ENCODE measurements at regions of chr17 and their contacts with region 1.

Region 1: DNA sequence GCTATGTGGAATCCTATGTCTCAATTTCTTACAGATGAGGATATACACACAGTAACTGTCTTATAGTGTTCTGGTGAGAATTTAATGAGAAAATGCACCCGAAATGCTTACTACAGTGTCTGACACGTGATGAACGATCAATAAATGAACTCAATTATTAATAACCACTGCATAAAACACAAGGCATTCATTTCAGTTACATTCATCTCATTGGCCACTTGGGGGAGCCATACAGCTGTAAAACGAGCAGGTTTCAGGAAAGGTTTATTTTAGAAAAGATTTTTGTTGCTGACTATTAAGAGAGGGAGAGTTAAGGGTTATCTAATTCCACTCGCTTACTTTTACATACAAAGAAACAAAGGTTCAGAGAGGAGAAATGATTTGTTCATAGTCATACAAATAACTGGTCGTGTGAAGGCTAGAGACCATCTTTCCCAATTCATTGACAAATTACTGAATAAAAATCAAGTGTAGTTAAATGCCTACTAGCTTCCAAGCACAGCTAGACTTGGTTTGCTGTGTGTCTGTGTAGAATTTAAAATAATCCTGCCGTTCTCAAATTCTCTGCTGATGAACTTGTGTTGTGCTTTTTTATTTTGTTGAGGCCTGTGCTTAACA is 160.1 kb downstream of the MAP2K4 start:
- DNase-seq: peak in 2 of 9 experiments; percentile 22 to 33
- ATAC-seq: no peak
- H3K4me3 ChIP-seq: no peak overlapping the region
- H3K4me3 Mint-ChIP-seq: no peak overlapping the region
- H3K27ac ChIP-seq: no peak overlapping the region
- H3K27ac Mint-ChIP-seq: no peak overlapping the region
- H3K4me1 ChIP-seq: no peaks in the 10 kb centered on the region
- H3K4me1 Mint-ChIP-seq: no peaks in the 10 kb centered on the region
- H3K27me3 ChIP-seq: no peaks in the 10 kb centered on the region
- H3K27me3 Mint-ChIP-seq: peaks cover 2% of the 10 kb centered on the region
- CTCF ChIP-seq: peak; percentile 65

Region 2: GRCh38 chr17:11928436-11928835 is 252.3 kb before region 1 on chr17:
- CTCF ChIA-PET with region 1: no interaction called
- POLR2A ChIA-PET with region 1: no interaction called
- intact Hi-C with region 1: no loop called
- DNase-seq: no peak
- ATAC-seq: no peak
- H3K4me3 ChIP-seq: no peak overlapping the region
- H3K4me3 Mint-ChIP-seq: no peak overlapping the region
- H3K27ac ChIP-seq: no peak overlapping the region
- H3K27ac Mint-ChIP-seq: no peak overlapping the region
- H3K4me1 ChIP-seq: no peaks in the 10 kb centered on the region
- H3K4me1 Mint-ChIP-seq: no peaks in the 10 kb centered on the region
- H3K27me3 ChIP-seq: no peaks in the 10 kb centered on the region
- H3K27me3 Mint-ChIP-seq: peaks cover 13% of the 10 kb centered on the region
- CTCF ChIP-seq: no peak

Region 3: DNA sequence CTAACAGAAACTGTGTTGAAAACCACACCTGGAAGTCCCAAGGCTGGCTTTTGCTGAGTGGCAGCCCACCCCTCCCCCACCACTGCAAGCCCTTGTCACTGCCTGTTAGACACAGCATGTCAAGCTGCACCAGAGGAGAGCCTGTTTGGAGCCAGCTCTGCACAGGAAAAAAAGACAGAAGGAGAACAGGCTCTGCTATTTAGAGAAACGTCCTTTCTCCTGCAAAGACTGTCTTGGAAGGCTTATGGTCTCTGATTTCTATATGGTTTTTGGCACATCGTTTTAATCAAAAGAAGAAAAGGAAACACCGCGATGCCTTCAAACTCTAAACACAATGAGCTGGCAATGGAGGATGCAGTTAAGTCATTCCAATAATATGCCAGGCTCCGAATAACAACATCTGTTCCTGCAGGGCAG is 115.5 kb after region 1 on chr17:
- CTCF ChIA-PET with region 1: no interaction called
- POLR2A ChIA-PET with region 1: no interaction called
- intact Hi-C with region 1: no loop called
- DNase-seq: no peak
- ATAC-seq: no peak
- H3K4me3 ChIP-seq: no peak overlapping the region
- H3K4me3 Mint-ChIP-seq: no peak overlapping the region
- H3K27ac ChIP-seq: no peak overlapping the region
- H3K27ac Mint-ChIP-seq: no peak overlapping the region
- H3K4me1 ChIP-seq: no peaks in the 10 kb centered on the region
- H3K4me1 Mint-ChIP-seq: no peaks in the 10 kb centered on the region
- H3K27me3 ChIP-seq: no peaks in the 10 kb centered on the region
- H3K27me3 Mint-ChIP-seq: no peaks in the 10 kb centered on the region
- CTCF ChIP-seq: no peak

Region 4: DNA sequence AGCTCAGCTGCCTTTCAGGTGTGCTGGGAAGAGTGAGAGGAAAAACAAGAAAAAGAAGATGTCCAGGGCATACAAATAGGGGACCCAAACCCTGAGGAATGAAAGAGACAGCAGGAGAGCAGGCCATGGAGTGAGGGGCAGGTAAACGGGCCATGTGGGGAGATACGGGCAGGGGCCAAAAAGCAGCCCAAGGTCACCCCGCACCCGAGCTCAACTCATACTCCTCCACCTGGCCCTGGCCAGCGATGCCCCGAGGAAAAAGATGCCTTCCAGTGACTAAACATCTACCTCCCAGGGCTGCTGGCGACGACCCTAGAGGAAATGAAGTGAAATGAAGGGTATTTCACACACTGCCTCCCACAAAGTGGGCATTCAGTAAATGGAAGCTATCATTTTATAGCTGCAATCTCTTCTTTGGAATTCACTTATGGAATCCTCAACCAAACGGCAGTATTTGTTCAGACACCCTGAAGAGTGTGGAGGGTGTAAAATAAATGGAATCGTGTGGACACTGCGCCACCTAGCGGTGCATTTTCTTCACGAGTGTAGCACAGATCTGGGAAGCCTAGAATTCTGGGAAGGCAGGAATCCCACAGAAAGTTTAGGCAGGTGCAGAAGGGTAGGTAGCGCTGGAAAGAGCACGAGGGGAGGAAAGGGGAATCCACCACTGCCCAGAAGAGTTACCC is 822.2 kb after region 1 on chr17:
- CTCF ChIA-PET with region 1: no interaction called
- POLR2A ChIA-PET with region 1: no interaction called
- intact Hi-C with region 1: loop called (anchors 5 kb)
- DNase-seq: peak in 7 of 9 experiments; percentile 24 to 63 (median 59)
- ATAC-seq: peak; percentile 40
- H3K4me3 ChIP-seq: no peak overlapping the region
- H3K4me3 Mint-ChIP-seq: no peak overlapping the region
- H3K27ac ChIP-seq: no peak overlapping the region
- H3K27ac Mint-ChIP-seq: no peak overlapping the region
- H3K4me1 ChIP-seq: no peaks in the 10 kb centered on the region
- H3K4me1 Mint-ChIP-seq: peaks cover 2% of the 10 kb centered on the region
- H3K27me3 ChIP-seq: no peaks in the 10 kb centered on the region
- H3K27me3 Mint-ChIP-seq: no peaks in the 10 kb centered on the region
- CTCF ChIP-seq: peak; percentile 75

Measured in CD8-positive, alpha-beta T cell (primary cell).